Posterior vena cava (tissue), 2 donors: ENCODE measurements at regions of chr13 and their contacts with region 1.

Region 1: DNA sequence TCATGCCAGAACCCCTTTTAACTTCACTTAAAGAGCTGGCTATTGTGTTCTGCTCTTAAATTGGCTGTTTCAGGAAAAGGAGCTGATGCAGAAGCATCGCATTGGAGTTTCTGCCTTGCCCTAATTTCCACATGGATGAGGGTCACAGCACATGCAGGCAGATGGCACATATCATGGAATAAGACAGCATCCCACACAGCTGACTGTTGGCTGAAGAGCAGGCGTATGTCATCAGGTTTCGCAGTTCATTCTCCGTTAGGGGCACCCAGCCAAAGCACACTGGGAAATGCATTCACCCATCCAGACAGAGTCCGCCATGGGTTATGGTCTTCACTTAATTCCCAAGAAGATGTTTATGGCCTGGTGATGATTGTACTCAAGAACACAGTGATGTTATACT is 572.5 kb downstream of the LIG4 start:
- DNase-seq: no peak

Region 2: DNA sequence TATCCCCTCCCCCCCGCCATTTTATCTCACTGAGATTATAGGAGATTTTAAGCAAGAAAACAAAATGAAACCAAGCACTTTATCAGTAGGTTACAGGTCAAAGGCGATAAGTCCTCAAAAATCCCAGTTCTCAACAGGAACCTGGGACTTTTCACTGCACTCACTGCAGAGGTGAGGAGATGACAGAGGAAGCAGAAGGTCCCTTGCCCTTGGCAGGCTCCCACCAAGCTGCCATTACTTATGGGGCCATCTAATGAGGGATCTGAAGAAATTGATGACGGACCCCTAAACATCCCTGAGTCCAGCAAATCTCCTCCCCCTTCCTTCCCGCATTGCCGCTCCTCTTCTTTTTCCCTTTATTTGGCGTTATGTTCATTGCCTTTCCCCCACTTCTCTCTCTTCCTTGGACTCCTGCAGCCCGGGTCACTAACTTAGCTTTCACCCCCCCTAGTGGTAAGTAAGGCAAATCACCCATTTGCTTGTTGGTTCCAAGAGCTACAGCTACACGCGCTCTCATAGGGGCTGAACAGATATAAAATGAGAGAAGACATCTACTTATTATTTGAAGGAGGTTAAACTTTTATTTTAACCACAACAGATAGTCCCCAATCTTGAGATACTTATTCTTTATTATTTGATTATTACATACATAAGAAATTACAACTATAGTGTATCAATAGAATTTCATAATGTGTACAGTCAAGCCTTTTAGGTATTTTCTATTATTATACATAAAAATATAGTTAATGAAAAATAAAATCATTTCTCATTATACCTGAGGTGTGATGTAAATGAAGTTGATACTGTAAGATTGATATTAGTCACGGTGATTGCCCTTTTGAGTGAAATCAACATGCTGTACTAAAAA is 1022.9 kb before region 1 on chr13:
- intact Hi-C with region 1: no loop called
- DNase-seq: no peak

Region 3: DNA sequence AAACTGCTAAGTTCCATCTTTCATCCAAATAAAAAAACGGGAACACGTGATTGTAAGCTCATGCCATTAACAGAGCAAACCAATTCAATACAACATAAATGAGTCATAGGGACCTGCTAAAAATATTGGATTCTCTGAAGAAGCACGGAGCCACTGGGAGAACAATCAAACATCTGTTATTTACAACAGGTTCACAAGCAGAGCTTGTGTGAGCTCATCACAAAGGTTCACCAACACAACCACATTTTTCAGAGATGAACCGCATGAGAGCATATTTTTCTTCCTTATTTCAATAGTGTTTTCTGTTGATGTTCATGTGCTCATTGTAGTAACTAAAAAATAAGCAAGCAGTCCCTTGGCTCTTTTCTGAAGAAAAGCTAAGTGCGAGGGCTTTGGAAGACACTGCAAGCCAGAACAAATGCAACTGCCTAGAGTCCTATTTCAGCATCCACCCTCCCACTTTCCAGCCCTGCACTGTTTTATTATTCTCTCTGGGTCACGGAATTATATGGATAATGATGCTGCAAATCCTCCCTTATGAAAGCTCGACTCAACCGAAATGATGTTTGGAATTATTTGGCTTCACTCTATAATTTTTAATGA is 26.7 kb after region 1 on chr13:
- intact Hi-C with region 1: loop called in 1 of 2 experiments (anchors 1 kb)
- DNase-seq: no peak

Region 4: GRCh38 chr13:107764046-107764445 is 121.2 kb after region 1 on chr13:
- intact Hi-C with region 1: no loop called
- DNase-seq: no peak